GM23248 (cell line): ENCODE measurements at regions of chr6 and their contacts with region 1.

Region 1: GRCh38 chr6:117449549-117450439 is 24.1 kb upstream of the ROS1 start:
- DNase-seq: peak; percentile 82
- H3K4me3 ChIP-seq: peak overlapping the region; percentile 36
- H3K27ac ChIP-seq: peak overlapping the region; percentile 91
- H3K4me1 ChIP-seq: peaks cover 63% of the 10 kb centered on the region
- H3K27me3 ChIP-seq: no peaks in the 10 kb centered on the region

Region 2: DNA sequence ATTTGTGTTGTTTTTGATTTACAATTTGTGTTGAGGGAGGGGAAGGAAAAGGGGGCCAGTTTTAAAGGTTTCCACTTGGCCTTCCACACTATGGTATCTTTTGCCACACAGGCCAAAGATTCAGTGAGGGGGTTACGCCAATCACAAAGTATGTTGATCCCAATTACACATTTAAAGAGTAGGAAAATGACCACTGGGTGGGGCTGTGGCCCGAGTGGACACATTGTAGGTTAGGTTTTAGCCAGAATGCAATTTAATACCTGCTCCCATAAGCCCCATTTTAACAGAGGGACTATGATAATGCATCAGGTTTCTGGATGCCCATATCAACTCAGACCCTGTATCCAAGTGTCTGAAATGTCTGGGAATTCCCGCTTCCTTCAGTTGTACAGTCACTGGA is 168.9 kb before region 1 on chr6:
- in situ Hi-C with region 1: no loop called
- DNase-seq: peak; percentile 26
- H3K4me3 ChIP-seq: no peak overlapping the region
- H3K27ac ChIP-seq: no peak overlapping the region
- H3K4me1 ChIP-seq: no peaks in the 10 kb centered on the region
- H3K27me3 ChIP-seq: 0 out of 2 replicates have a peak, but pooled peaks cover 11% of the 10 kb centered on the region

Region 3: DNA sequence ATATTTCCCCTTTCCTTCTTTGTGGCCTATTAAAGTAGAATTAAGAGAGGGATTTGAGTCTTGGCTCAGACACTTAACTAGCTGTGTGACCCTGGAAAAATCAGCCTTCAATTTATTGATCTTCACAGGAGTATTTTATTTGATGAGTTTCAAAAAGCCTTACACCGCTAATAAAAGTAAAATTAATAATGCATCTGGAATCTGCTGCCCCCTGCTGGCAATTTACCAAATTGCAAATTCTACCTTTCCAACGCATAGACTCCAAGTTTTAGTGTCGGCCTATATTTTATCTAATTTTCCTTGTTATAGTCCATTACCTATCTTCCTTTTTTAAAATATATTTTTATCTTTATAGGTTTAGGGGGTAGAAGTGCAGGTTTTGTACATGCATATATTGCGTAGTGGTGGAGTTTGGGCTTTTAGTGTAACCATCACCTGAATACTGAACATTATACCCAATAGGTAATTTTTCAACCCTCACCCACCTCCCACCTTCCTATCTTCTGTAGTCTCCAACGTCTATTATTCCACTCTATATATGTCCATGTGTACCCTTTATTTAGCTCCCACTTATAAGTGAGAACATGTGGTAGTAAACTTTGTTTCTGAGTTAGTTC is 106.2 kb after region 1 on chr6:
- in situ Hi-C with region 1: loop called (anchors 10 kb)
- DNase-seq: peak; percentile 43
- H3K4me3 ChIP-seq: 0 out of 2 replicates have a peak overlapping the region, but pooled peaks have one; percentile 1
- H3K27ac ChIP-seq: peak overlapping the region; percentile 17; the same call in 1 of the 2 replicates
- H3K4me1 ChIP-seq: peaks cover 17% of the 10 kb centered on the region
- H3K27me3 ChIP-seq: no peaks in the 10 kb centered on the region

Region 4: DNA sequence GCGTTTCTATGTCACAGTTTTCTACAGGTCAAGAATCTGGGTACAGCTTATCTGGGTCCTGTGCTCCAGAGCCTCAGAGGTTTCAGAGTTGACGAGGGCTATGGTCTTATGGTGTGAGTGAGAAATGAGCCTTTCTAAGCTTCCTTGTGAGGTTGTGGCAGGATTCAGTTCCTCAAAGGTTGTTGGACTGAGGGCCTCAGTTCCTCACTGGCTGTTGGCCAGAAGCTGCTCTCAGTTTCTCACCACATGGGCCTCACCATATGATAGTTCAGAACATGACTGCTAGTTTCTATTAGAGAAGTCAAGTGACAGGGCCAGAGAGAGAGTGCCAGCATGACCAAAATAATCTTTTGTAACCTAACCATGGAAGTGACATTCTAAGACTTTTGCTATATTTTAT is 321.6 kb after region 1 on chr6:
- in situ Hi-C with region 1: no loop called
- DNase-seq: no peak
- H3K4me3 ChIP-seq: no peak overlapping the region
- H3K27ac ChIP-seq: no peak overlapping the region
- H3K4me1 ChIP-seq: no peaks in the 10 kb centered on the region
- H3K27me3 ChIP-seq: no peaks in the 10 kb centered on the region; the same call in 1 of the 2 replicates

Region 5: GRCh38 chr6:117783279-117783678 is 333.5 kb after region 1 on chr6:
- in situ Hi-C with region 1: no loop called
- DNase-seq: no peak
- H3K4me3 ChIP-seq: no peak overlapping the region
- H3K27ac ChIP-seq: no peak overlapping the region
- H3K4me1 ChIP-seq: no peaks in the 10 kb centered on the region
- H3K27me3 ChIP-seq: no peaks in the 10 kb centered on the region